Activated CD4-positive, alpha-beta T cell treated with anti-CD3 and anti-CD28 coated beads for 36 hours (primary cell): ENCODE measurements at regions of chr17 and their contacts with region 1.

Region 1: GRCh38 chr17:56960596-56961538 is at the start of gene COIL:
- DNase-seq: peak; percentile 97
- ATAC-seq: peak; percentile 98
- H3K4me3 Mint-ChIP-seq: peak within 1 kb of the TSS; percentile 78
- H3K27ac Mint-ChIP-seq: peak within 1 kb of the TSS; percentile 81
- H3K4me1 Mint-ChIP-seq: peaks cover 23% of the 10 kb centered on the region
- H3K27me3 Mint-ChIP-seq: no peaks in the 10 kb centered on the region
- total RNA-seq, gene COIL: 20.9 to 21.3 TPM

Region 2: DNA sequence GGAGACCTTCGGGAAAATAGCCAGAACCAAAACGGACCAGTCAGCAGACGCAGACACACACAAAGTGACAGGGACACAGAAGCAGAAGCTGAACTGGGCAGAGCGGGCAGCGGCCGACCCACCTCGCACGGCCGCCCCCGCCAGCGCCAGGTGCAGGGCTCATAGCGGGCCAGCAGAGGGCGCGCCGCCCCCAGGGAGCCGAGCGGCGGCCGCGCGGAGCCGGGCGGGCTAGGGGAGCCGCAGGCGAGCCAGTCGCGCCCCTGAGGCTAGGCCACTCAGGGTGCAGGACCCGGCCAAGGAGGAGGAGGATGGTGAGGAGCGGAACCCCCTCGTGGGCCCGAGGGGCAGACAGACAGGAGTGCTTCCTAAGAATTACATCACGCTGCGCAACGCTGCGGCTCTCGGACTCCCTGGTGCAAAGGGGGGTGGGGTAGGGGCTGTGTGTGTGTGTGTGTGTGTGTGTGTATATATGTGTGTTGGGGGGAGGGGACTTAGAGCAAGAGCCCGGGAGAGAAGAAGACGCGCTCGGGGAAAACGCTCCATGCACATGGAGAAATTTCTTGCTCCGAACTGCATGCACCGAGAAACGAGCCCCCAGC is 368.3 kb before region 1 on chr17:
- CTCF ChIA-PET with region 1: interaction called, 6 read pairs
- POLR2A ChIA-PET with region 1: no interaction called
- intact Hi-C with region 1: loop called in 1 of 2 experiments (anchors 5 kb)
- DNase-seq: peak; percentile 82
- ATAC-seq: peak; percentile 60
- H3K4me3 Mint-ChIP-seq: peak overlapping the region; percentile 64
- H3K27ac Mint-ChIP-seq: no peak overlapping the region
- H3K4me1 Mint-ChIP-seq: peaks cover 20% of the 10 kb centered on the region
- H3K27me3 Mint-ChIP-seq: peaks cover 23% of the 10 kb centered on the region

Region 3: GRCh38 chr17:56819431-56820145 is 141.3 kb before region 1 on chr17:
- CTCF ChIA-PET with region 1: interaction called, 3 read pairs
- POLR2A ChIA-PET with region 1: no interaction called
- intact Hi-C with region 1: loop called in 1 of 2 experiments (anchors 1 kb)
- DNase-seq: peak; percentile 84
- ATAC-seq: peak; percentile 83
- H3K4me3 Mint-ChIP-seq: no peak overlapping the region
- H3K27ac Mint-ChIP-seq: peak overlapping the region; percentile 7
- H3K4me1 Mint-ChIP-seq: peaks cover 22% of the 10 kb centered on the region
- H3K27me3 Mint-ChIP-seq: no peaks in the 10 kb centered on the region

Region 4: DNA sequence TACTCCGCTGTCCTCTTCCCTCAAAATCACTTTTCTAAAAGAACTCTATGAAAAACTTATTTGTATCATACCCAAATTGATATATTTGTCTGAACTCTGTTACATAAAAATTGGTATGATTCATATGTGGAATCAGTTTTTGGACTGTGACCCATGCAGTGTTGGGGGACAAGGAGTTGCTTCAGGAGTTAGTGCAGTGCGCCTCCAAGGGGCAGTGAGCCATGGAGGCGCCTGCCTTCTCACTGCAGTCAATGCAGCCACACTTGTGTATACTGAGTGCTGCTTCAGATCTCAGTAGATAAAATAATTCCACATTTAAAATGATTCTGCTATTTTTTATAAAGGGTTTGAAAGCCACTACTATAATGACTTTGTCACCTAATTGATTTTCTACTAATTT is 94.4 kb before region 1 on chr17:
- CTCF ChIA-PET with region 1: no interaction called
- POLR2A ChIA-PET with region 1: no interaction called
- intact Hi-C with region 1: no loop called
- DNase-seq: no peak
- ATAC-seq: no peak
- H3K4me3 Mint-ChIP-seq: no peak overlapping the region
- H3K27ac Mint-ChIP-seq: no peak overlapping the region
- H3K4me1 Mint-ChIP-seq: peaks cover 16% of the 10 kb centered on the region
- H3K27me3 Mint-ChIP-seq: no peaks in the 10 kb centered on the region

Region 5: DNA sequence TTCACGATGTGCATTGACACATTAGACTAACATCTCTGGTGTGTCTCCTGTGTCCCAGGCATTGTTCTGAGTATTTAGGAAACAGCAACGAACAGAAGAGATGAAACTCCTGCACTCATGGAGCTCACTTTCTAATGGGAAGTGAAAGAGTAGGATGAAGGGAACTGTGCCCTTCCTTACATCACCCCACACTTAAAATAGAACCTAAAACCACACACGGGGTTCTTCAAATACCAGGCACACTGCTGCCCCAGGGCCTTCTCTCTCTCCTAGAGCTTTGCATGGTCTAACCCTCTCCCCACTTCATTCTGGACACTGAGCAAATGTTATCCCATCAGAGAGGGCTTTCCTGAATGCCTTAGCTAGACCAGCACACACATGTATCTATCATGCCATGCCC is 80.7 kb before region 1 on chr17:
- CTCF ChIA-PET with region 1: no interaction called
- POLR2A ChIA-PET with region 1: no interaction called
- intact Hi-C with region 1: no loop called
- DNase-seq: no peak
- ATAC-seq: no peak
- H3K4me3 Mint-ChIP-seq: no peak overlapping the region
- H3K27ac Mint-ChIP-seq: no peak overlapping the region
- H3K4me1 Mint-ChIP-seq: no peaks in the 10 kb centered on the region
- H3K27me3 Mint-ChIP-seq: peaks cover 2% of the 10 kb centered on the region

Region 6: GRCh38 chr17:56895946-56896595 is 64.8 kb before region 1 on chr17:
- CTCF ChIA-PET with region 1: no interaction called
- POLR2A ChIA-PET with region 1: no interaction called
- intact Hi-C with region 1: no loop called
- DNase-seq: no peak
- ATAC-seq: no peak
- H3K4me3 Mint-ChIP-seq: no peak overlapping the region
- H3K27ac Mint-ChIP-seq: no peak overlapping the region
- H3K4me1 Mint-ChIP-seq: peaks cover 10% of the 10 kb centered on the region
- H3K27me3 Mint-ChIP-seq: no peaks in the 10 kb centered on the region

Region 7: GRCh38 chr17:56970974-56971373 is 10.1 kb after region 1 on chr17:
- CTCF ChIA-PET with region 1: interaction called, 16 read pairs
- POLR2A ChIA-PET with region 1: no interaction called
- intact Hi-C with region 1: no loop called
- DNase-seq: no peak
- ATAC-seq: no peak
- H3K4me3 Mint-ChIP-seq: no peak overlapping the region
- H3K27ac Mint-ChIP-seq: no peak overlapping the region
- H3K4me1 Mint-ChIP-seq: no peaks in the 10 kb centered on the region
- H3K27me3 Mint-ChIP-seq: peaks cover 3% of the 10 kb centered on the region

Region 8: GRCh38 chr17:57009737-57010445 is 49.0 kb after region 1 on chr17:
- CTCF ChIA-PET with region 1: interaction called, 3 read pairs
- POLR2A ChIA-PET with region 1: no interaction called
- intact Hi-C with region 1: loop called in 1 of 2 experiments (anchors 5 kb)
- DNase-seq: peak; percentile 77
- ATAC-seq: peak; percentile 96
- H3K4me3 Mint-ChIP-seq: peak overlapping the region; percentile 2
- H3K27ac Mint-ChIP-seq: no peak overlapping the region
- H3K4me1 Mint-ChIP-seq: peaks cover 5% of the 10 kb centered on the region
- H3K27me3 Mint-ChIP-seq: no peaks in the 10 kb centered on the region